ENCODE measurements at regions of chrX and their contacts with region 1.

Region 1: GRCh38 chrX:120457766-120458180 is 11.3 kb downstream of the LAMP2 start:
- DNase-seq: no peak
- ATAC-seq: no peak

Region 2: GRCh38 chrX:119899125-119899524 is 558.6 kb before region 1 on chrX:
- intact Hi-C with region 1: no loop called
- DNase-seq: no peak
- ATAC-seq: no peak

Region 3: DNA sequence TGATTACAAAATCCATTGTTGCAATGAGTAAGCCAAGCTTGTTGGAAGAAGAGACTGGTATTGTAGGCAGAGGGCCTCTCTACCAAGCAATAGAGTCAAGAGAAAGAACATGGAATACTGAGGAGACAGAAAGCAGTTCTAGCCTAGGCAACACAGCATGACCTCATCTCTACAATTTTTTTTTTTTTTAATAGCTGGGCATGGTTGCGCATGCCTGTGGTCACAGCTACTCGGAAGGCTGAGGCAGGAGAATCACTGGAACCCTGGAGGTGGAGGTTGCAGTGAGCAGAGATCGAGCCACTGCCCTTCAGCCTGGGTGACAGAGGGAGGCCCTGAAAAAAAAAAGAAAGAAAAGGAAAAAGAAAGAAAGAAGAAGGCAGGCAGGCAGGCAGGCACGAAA is 218.8 kb before region 1 on chrX:
- intact Hi-C with region 1: no loop called
- DNase-seq: no peak
- ATAC-seq: no peak

Region 4: DNA sequence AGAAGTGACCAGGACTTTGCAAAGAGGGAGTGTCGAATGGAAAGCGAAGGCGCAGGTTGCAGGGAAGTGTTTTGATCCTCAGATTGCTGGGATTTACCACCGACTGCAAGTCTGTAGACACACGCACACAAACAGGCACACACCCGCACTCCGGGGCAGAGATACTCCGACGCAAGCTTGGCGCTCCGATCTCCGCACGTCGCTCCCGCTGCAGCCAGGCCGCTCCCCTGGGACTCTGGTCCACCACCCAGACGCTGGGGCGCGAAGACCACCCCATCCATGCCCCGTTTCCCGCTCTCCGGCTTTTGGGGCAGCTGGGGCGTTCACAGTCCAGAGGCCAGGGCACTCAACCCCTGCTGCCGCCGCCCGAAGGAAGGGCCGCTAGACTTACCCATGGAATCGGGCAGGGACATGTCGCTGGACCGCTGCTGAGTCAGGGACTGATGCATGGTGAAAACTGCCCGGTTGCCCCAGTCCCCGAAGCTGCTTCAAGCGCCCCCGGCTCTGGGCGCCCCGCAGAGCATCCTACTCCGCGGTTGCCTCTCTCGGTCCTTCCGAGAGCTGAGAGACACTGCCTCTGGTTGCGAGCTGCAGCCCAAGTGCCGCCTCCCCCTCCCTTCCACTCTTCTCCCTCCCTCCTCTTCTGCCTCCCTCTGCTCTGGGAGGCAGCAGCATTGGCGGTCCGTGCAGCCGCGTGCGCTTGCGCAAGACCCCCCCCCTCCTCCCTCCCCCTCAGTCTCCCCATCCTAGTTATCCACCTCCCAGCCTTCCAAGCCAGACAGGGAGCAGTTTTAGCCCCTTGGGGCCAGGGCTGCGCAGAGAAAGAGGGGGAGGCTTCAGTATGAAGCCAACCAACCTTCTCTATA is 146.7 kb before region 1 on chrX and contains the start of gene TMEM255A:
- intact Hi-C with region 1: loop called (anchors 10 kb)
- DNase-seq: peak; percentile 58
- ATAC-seq: peak; percentile 76
- total RNA-seq, gene TMEM255A: 0.97 TPM

Region 5: GRCh38 chrX:120536061-120536460 is 78.3 kb after region 1 on chrX:
- intact Hi-C with region 1: no loop called
- DNase-seq: no peak
- ATAC-seq: no peak

Region 6: DNA sequence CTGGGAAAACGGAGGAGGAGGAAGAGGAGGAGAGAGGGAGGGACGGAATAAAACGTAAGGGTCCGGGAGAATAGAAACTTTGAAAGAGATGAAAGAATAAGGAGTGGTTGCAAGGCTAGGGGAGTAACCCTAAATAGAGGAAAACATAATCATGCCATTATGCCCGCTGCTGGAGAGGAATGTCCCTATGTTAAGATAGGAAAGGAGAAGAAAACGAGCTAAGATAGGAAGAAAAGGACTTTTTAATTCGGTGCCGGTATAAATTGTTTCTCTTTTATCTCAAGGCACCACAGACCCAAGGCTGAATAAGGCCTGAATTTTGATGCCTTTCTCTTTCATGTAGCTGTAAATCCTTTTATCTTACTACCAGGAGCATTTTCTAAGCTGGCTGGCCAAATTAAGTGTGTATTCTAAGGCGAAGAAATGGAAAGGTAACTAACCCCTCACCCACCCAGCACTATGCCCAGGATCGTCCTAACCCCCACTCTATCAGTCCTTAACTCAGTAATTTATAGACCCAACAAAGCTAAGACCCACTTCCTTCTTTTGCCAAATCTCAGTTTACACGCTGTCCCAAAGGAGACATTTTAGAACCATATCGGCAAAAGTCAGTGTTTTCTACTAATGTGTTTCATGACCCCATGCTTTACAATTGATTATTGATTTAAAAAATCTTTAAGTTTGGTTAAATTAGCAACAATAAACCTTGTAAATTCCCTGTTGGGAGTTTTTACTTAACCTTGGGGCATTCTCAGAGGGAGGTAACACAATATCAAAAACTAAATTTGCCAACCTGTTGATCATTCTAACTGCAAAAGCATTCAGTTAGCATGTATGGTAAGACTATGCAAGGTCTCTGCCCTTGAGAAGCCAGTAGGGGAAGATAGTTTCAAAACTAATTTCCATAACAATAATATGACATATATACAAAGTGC is 104.1 kb after region 1 on chrX:
- intact Hi-C with region 1: no loop called
- DNase-seq: no peak
- ATAC-seq: no peak

Measured in Right ventricle myocardium inferior (tissue), 1 donor.